ENCODE measurements at regions of chr9 and their contacts with region 1.

Region 1: DNA sequence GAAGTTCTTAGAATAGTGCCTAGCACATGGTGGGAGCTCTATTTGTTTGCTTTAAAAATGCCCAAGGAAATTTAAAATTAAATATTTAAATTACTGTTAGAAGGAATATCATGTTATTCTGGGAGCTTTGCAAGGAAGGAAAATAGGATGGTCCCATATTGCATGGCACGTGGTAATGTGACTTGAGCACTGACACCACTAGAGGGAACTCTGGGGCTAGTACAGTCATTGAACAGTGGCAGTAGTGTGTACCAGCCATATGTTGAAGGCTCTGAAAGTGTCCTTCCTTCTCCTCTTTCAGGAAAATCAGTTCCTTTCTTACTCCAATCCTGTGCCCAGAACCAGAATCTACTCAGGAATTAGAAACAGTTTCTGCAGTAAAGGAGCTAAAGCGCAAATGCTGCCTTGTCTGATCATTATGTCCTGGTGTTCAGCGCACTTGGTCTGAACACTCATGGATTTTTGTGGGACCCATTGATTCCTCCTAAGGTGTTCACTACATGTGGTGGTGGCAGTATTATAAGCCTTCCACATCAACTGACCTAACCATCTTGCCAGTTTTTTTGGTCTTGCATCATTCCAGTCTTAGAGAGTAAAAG is 54.1 kb downstream of the GDA start:
- DNase-seq: peak; percentile 56
- ATAC-seq: peak; percentile 96
- H3K4me3 ChIP-seq: no peak overlapping the region
- H3K27ac ChIP-seq: no peak overlapping the region
- H3K4me1 ChIP-seq: no peaks in the 10 kb centered on the region
- H3K27me3 ChIP-seq: peaks cover 17% of the 10 kb centered on the region
- CTCF ChIP-seq: peak; percentile 67

Region 2: DNA sequence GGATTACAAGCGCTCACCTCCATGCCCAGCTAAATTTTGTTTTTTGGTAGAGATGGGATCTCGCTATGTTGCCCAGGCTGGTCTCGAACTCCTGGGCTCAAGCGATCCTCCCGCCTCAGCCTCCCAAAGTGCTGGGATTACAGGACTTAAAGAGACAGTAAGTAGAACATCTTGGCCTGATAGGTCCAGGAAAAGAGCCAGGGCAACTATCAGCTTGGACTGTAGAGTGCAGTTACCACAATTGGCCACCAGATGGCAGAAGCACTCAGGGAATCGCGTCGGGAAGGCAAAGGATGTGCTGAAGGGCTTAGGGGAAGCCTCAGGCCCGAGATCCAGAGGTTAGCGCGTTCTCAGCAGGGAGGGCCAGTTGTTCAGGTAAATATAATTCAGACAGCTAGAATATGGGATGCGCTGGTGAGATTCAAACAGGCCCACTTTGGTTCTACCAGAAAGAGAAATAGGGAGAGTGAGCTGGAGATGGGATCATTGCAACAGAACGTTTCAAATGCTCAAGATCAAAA is 164.4 kb before region 1 on chr9:
- CTCF ChIA-PET with region 1: no interaction called
- POLR2A ChIA-PET with region 1: no interaction called
- intact Hi-C with region 1: loop called (anchors 1 kb)
- DNase-seq: peak; percentile 80
- ATAC-seq: peak; percentile 83
- H3K4me3 ChIP-seq: no peak overlapping the region
- H3K27ac ChIP-seq: no peak overlapping the region
- H3K4me1 ChIP-seq: peaks cover 8% of the 10 kb centered on the region; the same call in 1 of the 2 replicates
- H3K27me3 ChIP-seq: no peaks in the 10 kb centered on the region
- CTCF ChIP-seq: peak; percentile 81

Region 3: DNA sequence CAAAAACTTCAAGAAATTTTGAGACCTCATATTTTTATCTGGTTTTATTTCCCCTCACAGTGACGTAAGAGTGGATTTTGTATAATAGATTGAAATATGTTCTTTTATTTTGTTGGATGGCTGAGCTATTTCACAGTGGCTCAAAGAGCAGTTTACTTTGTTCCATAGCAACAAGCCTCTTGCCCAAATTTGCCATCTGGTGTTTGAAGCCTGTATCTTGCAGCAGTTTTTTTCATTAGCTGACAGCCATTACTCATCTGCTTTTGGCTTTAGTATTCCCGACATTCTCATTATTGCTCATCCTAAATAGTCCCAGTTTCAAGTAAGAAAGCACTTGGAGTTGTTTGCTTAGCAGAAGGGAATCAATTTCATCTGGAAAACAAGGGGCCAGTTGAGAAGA is 17.7 kb before region 1 on chr9:
- CTCF ChIA-PET with region 1: no interaction called
- POLR2A ChIA-PET with region 1: no interaction called
- intact Hi-C with region 1: no loop called
- DNase-seq: peak; percentile 13
- ATAC-seq: no peak
- H3K4me3 ChIP-seq: no peak overlapping the region
- H3K27ac ChIP-seq: no peak overlapping the region
- H3K4me1 ChIP-seq: no peaks in the 10 kb centered on the region
- H3K27me3 ChIP-seq: peaks cover 11% of the 10 kb centered on the region; the same call in 1 of the 2 replicates
- CTCF ChIP-seq: no peak

Region 4: GRCh38 chr9:72826996-72827949 is 624.0 kb after region 1 on chr9:
- CTCF ChIA-PET with region 1: no interaction called
- POLR2A ChIA-PET with region 1: no interaction called
- intact Hi-C with region 1: loop called (anchors 5 kb)
- DNase-seq: no peak
- ATAC-seq: no peak
- H3K4me3 ChIP-seq: no peak overlapping the region
- H3K27ac ChIP-seq: no peak overlapping the region
- H3K4me1 ChIP-seq: no peaks in the 10 kb centered on the region
- H3K27me3 ChIP-seq: 0 out of 2 replicates have a peak, but pooled peaks cover 7% of the 10 kb centered on the region
- CTCF ChIP-seq: no peak

Measured in PC-3 (cell line).